ENCODE measurements at regions of chr4 and their contacts with region 1.

Region 1: GRCh38 chr4:102713096-102713495 is 47.7 kb downstream of the MANBA start:
- DNase-seq: no peak
- H3K4me3 ChIP-seq: no peak overlapping the region
- H3K27ac ChIP-seq: no peak overlapping the region
- H3K4me1 ChIP-seq: no peaks in the 10 kb centered on the region
- H3K27me3 ChIP-seq: no peaks in the 10 kb centered on the region
- CTCF ChIP-seq: no peak

Region 2: GRCh38 chr4:101252721-101253120 is 1460.4 kb before region 1 on chr4:
- CTCF ChIA-PET with region 1: no interaction called
- POLR2A ChIA-PET with region 1: no interaction called
- intact Hi-C with region 1: no loop called
- DNase-seq: no peak
- H3K4me3 ChIP-seq: no peak overlapping the region
- H3K27ac ChIP-seq: peak overlapping the region; percentile 1
- H3K4me1 ChIP-seq: peaks cover 36% of the 10 kb centered on the region
- H3K27me3 ChIP-seq: no peaks in the 10 kb centered on the region
- CTCF ChIP-seq: no peak

Region 3: GRCh38 chr4:102674881-102675540 is 38.1 kb before region 1 on chr4:
- CTCF ChIA-PET with region 1: no interaction called
- POLR2A ChIA-PET with region 1: no interaction called
- intact Hi-C with region 1: loop called (anchors 5 kb)
- DNase-seq: no peak
- H3K4me3 ChIP-seq: no peak overlapping the region
- H3K27ac ChIP-seq: no peak overlapping the region
- H3K4me1 ChIP-seq: no peaks in the 10 kb centered on the region
- H3K27me3 ChIP-seq: no peaks in the 10 kb centered on the region
- CTCF ChIP-seq: no peak